ENCODE measurements at regions of chr5 and their contacts with region 1.

Region 1: DNA sequence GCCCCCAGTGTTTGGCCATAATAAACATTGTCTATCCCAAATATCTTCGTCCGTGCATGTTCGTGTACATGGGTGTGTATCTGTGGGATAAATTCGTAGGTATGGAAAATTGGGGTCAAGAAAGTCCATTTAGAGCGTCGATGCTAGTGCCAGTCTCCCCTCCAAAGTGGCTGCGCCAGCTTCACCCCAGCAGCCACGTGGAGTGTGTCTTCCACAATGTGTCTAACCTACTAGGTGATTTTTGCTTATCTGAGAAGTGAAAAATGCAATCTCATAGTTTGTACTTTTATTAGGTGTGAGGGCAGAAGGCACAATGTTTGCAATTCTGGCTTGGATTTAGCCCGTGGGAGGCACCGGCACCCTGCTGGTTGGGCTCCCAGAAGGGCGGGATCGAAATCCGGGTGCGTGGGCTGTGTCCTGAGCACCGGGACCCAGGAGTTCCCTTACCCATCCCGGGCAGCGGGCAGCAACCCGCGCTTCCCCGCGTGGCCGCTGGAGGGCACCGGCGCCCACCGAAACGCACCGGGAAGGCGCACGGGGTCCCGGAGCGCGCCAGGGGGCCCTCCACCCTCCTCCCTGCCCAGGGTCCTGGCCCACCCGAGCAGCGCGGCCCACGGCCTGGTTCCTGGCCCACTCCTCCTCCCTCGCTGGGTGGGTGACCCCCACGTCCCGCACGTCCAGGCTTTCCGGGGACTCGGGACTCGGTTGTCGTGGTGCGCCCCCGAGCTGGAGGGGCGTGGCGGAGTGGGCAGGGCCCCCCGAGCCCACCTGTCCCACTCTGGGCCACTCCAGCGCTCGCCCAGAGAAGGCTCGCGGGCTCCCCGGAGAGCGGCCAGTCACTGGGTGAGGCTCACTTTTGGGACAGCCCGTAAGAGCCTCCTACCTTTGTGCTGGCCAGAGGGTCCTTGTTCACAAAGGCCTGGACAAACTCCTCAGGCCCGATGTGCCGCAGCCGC is 55.4 kb upstream of the RNF130 start:
- DNase-seq: no peak
- H3K4me3 ChIP-seq: no peak overlapping the region
- H3K27ac ChIP-seq: no peak overlapping the region
- H3K4me1 ChIP-seq: peaks cover 0 to 7% (median 3%) of the 10 kb centered on the region in 4 donors
- H3K27me3 ChIP-seq: peaks cover 0 to 20% (median 3%) of the 10 kb centered on the region in 3 donors
- CTCF ChIP-seq: peak in 3 of 4 experiments; percentile 38 to 75 (median 55)
- EP300 ChIP-seq: no peak
- POLR2A ChIP-seq: no peak

Region 2: GRCh38 chr5:180209137-180209581 is 82.2 kb after region 1 on chr5 and contains the start of gene RASGEF1C:
- intact Hi-C with region 1: loop called (anchors 2 kb)
- DNase-seq: no peak
- H3K4me3 ChIP-seq: peak within 1 kb of the TSS; percentile 4 to 47 (median 42)
- H3K27ac ChIP-seq: peak within 1 kb of the TSS in 1 of 4 donors; percentile 22
- H3K4me1 ChIP-seq: peaks cover 0 to 28% (median 21%) of the 10 kb centered on the region in 4 donors
- H3K27me3 ChIP-seq: peaks cover 5 to 18% (median 16%) of the 10 kb centered on the region in 3 donors
- CTCF ChIP-seq: peak in 1 of 4 experiments; percentile 27
- EP300 ChIP-seq: no peak
- POLR2A ChIP-seq: no peak
- total RNA-seq, gene RASGEF1C: 0.66 to 4.2 (median 1.5) TPM

Region 3: DNA sequence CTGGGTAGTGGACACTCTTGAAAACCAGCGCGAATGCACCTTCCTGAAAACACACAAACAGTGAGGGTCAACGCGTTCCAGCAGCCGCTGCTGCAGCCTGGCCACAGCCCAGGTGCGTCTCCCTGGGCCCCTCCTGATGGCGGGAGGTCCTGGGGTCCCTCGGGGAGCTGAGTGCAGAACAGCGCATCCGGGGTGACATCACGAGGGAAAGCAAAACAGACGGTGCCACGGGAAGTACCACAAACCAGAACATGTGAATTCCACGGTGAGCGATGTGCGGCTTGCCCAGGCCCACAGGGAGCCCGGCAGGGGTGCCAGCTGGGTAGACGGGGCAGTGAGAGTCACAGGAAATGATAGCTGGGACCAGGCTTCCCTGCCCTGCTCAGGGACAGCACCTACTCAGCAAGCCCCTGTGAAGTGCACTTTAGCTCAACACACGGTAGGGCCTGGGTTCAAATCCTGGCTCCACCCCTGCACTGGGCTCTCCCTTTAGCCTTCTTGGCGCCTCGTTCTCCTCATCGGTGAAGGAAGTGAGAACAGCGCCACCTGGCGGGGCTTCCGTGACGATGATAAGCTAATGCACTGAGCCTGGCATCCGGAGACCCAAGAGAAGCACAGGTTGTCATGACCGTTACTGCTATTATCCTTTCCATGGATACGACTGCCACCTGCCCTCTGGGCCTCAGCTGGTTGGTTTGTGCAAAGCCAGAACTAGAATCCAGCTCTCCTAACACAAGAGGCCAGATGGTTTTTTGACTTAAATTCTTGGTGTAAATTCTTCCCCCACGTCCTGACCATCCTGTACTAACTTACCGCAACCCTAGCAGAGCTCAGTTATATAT is 201.5 kb after region 1 on chr5:
- intact Hi-C with region 1: loop called (anchors 5 kb)
- DNase-seq: peak; percentile 91
- H3K4me3 ChIP-seq: no peak overlapping the region
- H3K27ac ChIP-seq: no peak overlapping the region
- H3K4me1 ChIP-seq: peaks cover 0 to 17% (median 11%) of the 10 kb centered on the region in 4 donors
- H3K27me3 ChIP-seq: no peaks in the 10 kb centered on the region
- CTCF ChIP-seq: peak; percentile 31 to 62 (median 54)
- EP300 ChIP-seq: no peak
- POLR2A ChIP-seq: no peak

Measured in sigmoid colon (tissue), 7 donors.